ENCODE measurements at regions of chr20 and their contacts with region 1.

Region 1: GRCh38 chr20:63911176-63911575 is 16.2 kb downstream of the DNAJC5 start:
- H3K4me3 ChIP-seq: no peak overlapping the region
- H3K27ac ChIP-seq: no peak overlapping the region
- H3K4me1 ChIP-seq: peaks cover 2% of the 10 kb centered on the region; the same call in 1 of the 2 replicates
- CTCF ChIP-seq: no peak

Region 2: DNA sequence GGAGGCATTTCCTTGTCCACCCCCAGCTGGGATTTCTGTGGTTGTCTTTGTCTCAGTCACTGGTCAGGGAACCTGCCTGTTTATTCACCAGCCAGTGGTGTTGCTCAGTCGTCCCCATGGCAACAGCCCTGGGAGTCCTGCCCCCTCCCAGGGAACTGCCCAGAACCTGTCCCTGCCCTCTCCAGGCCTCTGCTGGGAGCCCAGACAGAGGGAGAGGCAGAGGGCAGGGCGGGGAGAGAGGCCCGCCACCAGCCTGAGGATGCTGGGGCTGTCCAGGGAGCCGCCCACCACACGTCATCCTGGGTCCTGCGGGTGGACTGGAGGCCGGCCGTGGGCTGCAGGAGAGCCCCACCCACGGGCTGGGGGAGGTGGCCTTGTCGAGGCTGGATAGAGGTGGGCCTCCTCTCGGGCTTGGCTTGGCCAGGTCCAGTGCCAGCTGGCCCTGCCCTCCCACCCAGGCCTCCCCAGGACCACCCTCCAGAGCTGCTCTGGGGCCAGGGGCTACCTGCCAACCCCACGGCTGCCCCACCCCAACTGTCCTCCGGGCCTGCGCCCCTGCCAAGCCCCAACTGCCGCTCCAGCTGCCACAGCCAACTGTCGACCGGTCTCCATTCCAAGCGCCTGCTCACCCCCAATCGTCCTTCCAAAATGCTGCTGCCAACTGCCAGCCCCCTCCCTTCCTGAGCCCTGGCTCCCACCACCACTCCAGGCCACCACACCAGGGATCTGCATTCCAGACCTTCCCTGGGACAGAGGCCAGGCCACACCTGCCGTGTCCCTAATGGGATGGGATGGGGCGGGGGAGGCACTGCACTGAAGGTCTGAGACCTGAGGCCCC is 75.9 kb before region 1 on chr20:
- CTCF ChIA-PET with region 1: no interaction called
- POLR2A ChIA-PET with region 1: no interaction called
- H3K4me3 ChIP-seq: no peak overlapping the region
- H3K27ac ChIP-seq: no peak overlapping the region
- H3K4me1 ChIP-seq: no peaks in the 10 kb centered on the region
- CTCF ChIP-seq: no peak

Region 3: DNA sequence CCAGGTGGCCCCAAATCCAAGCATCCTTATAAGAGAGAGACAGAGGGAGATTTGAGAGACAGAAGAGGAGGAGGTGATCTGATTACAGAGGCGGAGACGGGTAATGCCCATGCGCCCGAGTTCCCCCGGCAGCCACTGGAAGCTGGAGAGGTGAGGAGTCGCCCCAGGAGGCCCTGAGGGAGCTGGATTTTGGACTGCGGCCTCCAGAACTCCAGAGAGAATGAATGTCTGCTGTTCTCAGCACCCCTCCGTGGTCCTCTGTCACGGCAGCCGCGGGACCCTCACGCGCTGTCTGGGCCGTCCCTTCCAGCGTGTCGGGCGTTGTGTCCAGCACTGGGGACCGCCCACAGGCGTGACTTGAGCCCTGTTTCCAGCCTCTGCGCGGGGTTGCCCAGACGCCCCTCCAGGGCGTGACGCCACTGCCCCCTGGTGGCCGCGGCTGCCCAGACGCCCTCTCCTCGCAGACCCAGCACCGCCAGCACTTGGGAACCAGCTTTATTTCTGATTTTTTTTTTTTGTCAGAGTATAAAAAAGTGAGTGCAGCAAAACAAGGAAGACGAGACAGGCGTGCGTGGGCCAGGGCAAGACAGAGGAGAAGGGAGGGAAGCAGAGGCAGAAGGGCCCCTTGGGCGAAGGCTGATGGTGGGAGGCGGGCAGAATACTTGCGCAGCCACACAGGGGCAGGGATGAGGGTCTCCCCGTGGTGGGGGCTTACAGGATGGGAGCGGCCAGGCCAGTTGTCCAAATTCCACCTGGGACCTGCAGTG is 62.6 kb after region 1 on chr20:
- CTCF ChIA-PET with region 1: interaction called, 16 read pairs
- POLR2A ChIA-PET with region 1: no interaction called
- H3K4me3 ChIP-seq: no peak overlapping the region; the same call in 1 of the 2 replicates
- H3K27ac ChIP-seq: no peak overlapping the region
- H3K4me1 ChIP-seq: 0 out of 2 replicates have a peak, but pooled peaks cover 3% of the 10 kb centered on the region
- CTCF ChIP-seq: peak; percentile 97

Measured in HEK293 (cell line).